H1 (cell line): ENCODE measurements at regions of chr3 and their contacts with region 1.

Region 1: DNA sequence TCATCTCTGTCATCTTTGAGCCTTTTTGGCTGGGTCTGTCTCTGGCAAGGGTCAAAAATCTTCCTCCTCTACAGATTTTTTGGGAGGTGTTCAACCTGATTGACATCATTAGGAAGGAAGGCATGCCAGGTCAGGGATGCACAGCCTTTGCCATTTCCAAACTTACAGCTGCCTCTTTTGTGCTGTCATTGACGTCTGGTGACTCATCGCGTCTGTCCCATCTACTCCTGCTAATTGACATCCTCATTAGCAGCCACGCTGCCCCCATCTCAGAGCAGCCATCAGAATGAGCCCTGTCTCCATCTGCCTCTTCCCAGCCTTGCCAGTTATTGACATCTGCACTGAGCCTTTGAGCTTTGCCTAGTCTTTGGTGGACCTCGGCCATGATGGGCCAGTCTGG is 53.0 kb downstream of the PDIA5 start:
- DNase-seq: no peak
- H3K4me3 ChIP-seq: no peak overlapping the region
- H3K27ac ChIP-seq: no peak overlapping the region
- H3K4me1 ChIP-seq: peaks cover 0 to 8% (median 2%) of the 10 kb centered on the region in 4 experiments; a peak in 6 of 7 replicates
- H3K27me3 ChIP-seq: no peaks in the 10 kb centered on the region
- CTCF ChIP-seq: no peak
- EP300 ChIP-seq: no peak
- POLR2A ChIP-seq: no peak
- RAD21 ChIP-seq: no peak

Region 2: DNA sequence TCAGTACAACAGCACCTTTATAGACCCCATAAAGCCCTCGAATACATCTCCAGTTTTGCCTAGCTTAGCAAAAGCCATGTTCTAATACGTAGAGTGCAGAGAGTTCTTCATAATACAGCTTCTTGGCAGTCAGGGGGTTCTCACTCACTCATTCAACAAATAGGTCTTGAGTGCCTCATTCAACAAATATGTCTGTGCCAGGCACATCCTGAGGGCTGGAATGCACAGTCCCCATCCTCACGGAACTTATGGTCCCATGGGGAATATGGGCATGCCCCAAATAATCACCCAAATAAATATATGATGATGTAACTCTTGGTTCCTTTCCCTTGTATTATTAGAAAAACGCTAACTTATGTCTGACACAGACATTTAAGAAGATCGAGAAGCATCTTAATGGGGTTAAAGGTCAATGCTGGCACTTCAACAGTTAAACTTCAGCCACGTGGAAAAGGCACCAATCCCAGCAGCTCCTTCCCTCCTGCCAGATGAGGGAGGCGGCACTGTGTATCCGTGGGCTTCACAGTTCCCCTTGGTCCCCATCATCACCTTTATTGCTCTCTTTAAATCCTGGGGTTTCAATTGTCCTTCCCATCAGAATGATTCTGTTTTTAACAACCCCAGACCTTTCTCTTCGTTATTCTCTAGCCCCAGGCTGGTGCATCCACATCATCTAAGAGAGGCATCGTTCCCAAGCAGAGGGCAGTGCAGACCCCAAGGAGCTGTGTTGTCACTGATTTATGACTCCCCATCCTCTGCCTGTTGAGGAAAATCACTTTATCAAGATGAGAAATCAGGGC is 73.3 kb before region 1 on chr3:
- CTCF ChIA-PET with region 1: interaction called, 17 read pairs
- POLR2A ChIA-PET with region 1: no interaction called
- DNase-seq: no peak
- H3K4me3 ChIP-seq: no peak overlapping the region
- H3K27ac ChIP-seq: no peak overlapping the region
- H3K4me1 ChIP-seq: peaks cover 0 to 4% (median 1%) of the 10 kb centered on the region in 4 experiments; a peak in 5 of 7 replicates
- H3K27me3 ChIP-seq: no peaks in the 10 kb centered on the region
- CTCF ChIP-seq: no peak
- EP300 ChIP-seq: no peak
- POLR2A ChIP-seq: no peak
- RAD21 ChIP-seq: no peak

Region 3: GRCh38 chr3:123098426-123099330 is 21.1 kb before region 1 on chr3:
- CTCF ChIA-PET with region 1: interaction called, 10 read pairs
- POLR2A ChIA-PET with region 1: interaction called, 3 read pairs
- DNase-seq: no peak
- H3K4me3 ChIP-seq: no peak overlapping the region
- H3K27ac ChIP-seq: peak overlapping the region; percentile 48; the same call in 1 of the 2 replicates
- H3K4me1 ChIP-seq: peaks cover 4 to 20% (median 12%) of the 10 kb centered on the region in 4 experiments
- H3K27me3 ChIP-seq: no peaks in the 10 kb centered on the region
- CTCF ChIP-seq: no peak
- EP300 ChIP-seq: no peak
- POLR2A ChIP-seq: no peak
- RAD21 ChIP-seq: no peak

Region 4: DNA sequence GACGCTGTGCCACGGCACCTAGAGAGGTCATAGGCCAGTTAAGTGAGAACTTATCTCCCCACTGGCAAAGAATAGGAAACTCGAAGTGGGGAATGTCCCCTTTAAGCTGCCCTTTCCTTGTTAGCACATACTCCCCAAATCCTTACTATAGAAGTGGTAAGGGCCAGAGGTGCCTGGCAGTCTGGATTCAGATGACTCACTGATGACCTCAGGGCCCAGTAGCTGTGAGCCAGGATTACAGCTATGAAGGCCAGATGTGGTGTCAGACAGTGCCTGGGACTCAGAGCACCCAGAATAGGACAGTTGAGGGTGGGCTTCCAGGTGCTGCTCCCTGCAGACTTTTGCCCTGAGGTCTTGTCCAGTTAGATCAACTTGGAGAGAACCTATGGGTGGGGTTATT is 15.3 kb before region 1 on chr3:
- CTCF ChIA-PET with region 1: interaction called, 10 read pairs
- POLR2A ChIA-PET with region 1: interaction called, 3 read pairs
- DNase-seq: no peak
- H3K4me3 ChIP-seq: no peak overlapping the region
- H3K27ac ChIP-seq: no peak overlapping the region
- H3K4me1 ChIP-seq: peaks cover 0 to 7% (median 4%) of the 10 kb centered on the region in 4 experiments; a peak in 6 of 7 replicates
- H3K27me3 ChIP-seq: no peaks in the 10 kb centered on the region
- CTCF ChIP-seq: no peak
- EP300 ChIP-seq: no peak
- POLR2A ChIP-seq: no peak
- RAD21 ChIP-seq: no peak

Region 5: GRCh38 chr3:123130079-123130750 is 10.4 kb after region 1 on chr3:
- CTCF ChIA-PET with region 1: interaction called, 27 read pairs
- POLR2A ChIA-PET with region 1: no interaction called
- DNase-seq: no peak
- H3K4me3 ChIP-seq: no peak overlapping the region
- H3K27ac ChIP-seq: no peak overlapping the region
- H3K4me1 ChIP-seq: no peaks in the 10 kb centered on the region
- H3K27me3 ChIP-seq: no peaks in the 10 kb centered on the region
- CTCF ChIP-seq: no peak
- EP300 ChIP-seq: no peak
- POLR2A ChIP-seq: no peak
- RAD21 ChIP-seq: no peak

Region 6: DNA sequence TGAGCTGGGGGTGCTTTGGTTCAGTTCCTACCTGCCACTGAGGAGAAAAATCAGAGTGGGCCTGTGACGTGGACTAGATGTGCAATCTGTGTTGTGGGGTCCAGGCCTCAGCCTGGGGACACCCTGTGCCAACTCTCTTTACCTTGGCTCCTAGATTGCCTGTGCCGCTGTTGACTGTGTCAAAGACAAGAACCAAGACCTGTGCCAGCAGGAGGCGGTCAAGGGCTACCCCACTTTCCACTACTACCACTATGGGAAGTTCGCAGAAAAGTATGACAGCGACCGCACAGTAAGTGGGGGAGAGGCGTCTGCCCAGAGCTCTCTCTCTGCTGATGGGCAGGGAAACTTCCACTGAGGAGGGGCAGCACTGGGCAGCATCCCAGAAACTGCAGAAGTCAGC is 41.4 kb after region 1 on chr3:
- CTCF ChIA-PET with region 1: interaction called, 27 read pairs
- POLR2A ChIA-PET with region 1: no interaction called
- DNase-seq: peak in 1 of 2 experiments; percentile 73
- H3K4me3 ChIP-seq: no peak overlapping the region
- H3K27ac ChIP-seq: no peak overlapping the region
- H3K4me1 ChIP-seq: no peaks in the 10 kb centered on the region
- H3K27me3 ChIP-seq: no peaks in the 10 kb centered on the region
- CTCF ChIP-seq: peak; percentile 62 to 67 (median 64)
- EP300 ChIP-seq: no peak
- POLR2A ChIP-seq: no peak
- RAD21 ChIP-seq: peak; percentile 60 to 67

Region 7: DNA sequence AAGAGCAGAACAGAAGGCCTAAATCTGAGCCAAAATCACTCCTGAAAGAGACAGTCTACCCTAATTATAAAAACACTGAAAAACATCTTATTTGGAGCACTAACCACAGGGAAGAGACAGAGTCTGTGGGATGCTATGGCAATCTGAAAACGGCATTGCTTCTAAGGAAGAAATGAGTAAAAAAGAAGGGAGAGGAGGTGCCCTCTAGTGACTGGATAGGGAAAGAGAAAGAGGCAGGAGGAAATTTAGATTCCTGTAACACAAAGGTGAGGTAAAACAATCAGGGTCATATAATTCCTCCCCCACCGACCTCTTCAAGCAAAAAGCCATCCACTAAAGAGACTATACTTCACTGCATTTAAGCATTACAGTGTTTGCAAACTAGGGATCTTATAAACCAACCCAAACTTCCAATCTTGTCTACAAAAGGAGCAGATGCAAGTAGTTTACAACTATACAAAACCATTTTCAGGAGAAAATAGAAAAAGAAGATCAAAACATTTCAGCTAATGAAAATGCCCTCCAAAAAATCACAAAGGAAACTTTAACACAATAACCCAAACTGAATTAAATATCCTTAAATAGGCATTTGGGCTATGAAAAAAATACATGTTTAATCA is 432.4 kb after region 1 on chr3:
- CTCF ChIA-PET with region 1: no interaction called
- POLR2A ChIA-PET with region 1: no interaction called
- DNase-seq: no peak
- H3K4me3 ChIP-seq: no peak overlapping the region
- H3K27ac ChIP-seq: no peak overlapping the region
- H3K4me1 ChIP-seq: no peaks in the 10 kb centered on the region
- H3K27me3 ChIP-seq: no peaks in the 10 kb centered on the region
- CTCF ChIP-seq: peak in 2 of 3 experiments; percentile 28 to 74; a peak in 2 of 4 replicates
- EP300 ChIP-seq: no peak
- POLR2A ChIP-seq: no peak
- RAD21 ChIP-seq: peak; percentile 49 to 57